Pancreas (tissue), 10 donors: ENCODE measurements at regions of chr11 and their contacts with region 1.

Region 1: DNA sequence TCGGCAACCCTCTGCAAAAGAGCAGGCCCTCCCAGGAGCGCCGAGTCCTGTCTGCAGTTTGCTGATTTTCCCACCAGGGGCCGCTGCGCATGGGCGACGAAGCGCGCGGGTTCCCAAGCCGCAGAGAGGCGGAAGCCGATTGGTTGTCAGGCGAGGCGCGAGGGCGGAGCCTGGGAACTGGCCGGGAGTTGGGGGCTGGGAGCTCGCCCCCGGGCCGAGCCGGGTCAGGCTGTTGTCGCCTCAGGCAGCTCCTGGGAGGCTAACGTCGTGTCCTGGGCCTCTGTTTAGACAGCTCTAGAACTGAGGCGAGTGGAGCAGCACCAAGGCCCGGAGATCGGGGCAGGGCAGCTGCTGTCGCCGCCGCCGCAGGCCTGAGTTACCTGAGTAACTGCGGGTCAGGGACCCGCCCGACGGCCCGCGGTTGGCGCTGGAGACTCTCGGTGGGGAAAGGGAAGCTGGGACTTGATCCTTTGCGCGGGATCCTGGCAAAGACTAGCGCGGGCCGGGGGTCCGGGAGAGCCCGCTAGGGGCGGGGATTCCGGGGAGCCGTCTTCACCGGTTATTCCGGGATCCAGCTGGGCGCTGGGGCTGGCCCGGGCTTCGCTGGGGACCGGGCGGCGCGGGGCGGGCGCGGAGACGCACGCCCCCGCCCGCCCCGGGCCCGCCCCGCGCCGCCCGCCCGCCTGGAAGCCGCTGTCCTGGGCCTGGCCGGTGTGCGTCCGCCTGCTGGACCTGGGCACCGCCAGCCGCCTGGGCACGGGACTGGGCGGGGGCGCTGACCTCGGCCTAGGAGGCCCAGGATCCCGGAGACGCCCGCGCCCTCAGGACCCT is at the start of gene STIM1:
- DNase-seq: peak; percentile 93 to 98 (median 96)
- ATAC-seq: peak; percentile 89 to 95 (median 91)
- H3K4me3 ChIP-seq: peak within 1 kb of the TSS; percentile 80 to 92 (median 82)
- H3K27ac ChIP-seq: peak within 1 kb of the TSS; percentile 85 to 96 (median 96)
- H3K4me1 ChIP-seq: peaks cover 16 to 36% (median 28%) of the 10 kb centered on the region in 3 donors
- H3K27me3 ChIP-seq: no peaks in the 10 kb centered on the region
- CTCF ChIP-seq: peak; percentile 96 to 98 (median 97)
- total RNA-seq, gene STIM1: 17.0 to 28.9 (median 20.4) TPM

Region 2: DNA sequence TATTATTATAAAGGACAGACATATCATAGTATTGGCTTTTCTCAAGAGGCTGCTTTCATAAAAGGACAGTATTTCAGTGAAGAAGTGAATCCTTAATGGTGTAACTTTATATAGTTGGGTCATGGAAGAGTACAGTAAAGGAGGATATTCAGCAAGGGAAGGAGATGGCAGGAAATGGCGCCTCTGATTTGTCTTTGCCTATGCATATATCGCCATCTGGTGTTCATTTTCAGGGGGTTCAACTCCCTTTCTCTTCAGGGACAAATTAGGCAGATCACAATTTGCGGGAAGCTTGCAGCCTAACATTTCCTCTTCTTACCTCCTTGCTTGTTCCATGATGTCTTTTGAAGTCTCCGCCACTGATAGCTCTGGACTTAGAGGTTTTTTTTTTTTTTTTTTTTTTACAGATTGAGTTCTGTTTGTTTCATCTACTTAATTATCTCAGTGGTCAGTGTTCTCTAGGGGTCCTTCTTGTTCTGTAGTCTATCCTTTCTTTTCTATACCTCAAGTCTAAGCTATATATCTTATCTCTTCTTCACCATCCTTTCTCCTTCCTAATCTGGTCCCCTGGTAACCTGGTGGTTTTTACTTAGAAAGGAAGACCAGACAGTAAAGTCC is 217.6 kb after region 1 on chr11:
- intact Hi-C with region 1: loop called in 2 of 3 experiments (anchors 2 to 5 kb)
- DNase-seq: peak in 3 of 6 donors; percentile 47 to 67 (median 57)
- ATAC-seq: peak; percentile 93 to 98 (median 98)
- H3K4me3 ChIP-seq: no peak overlapping the region
- H3K27ac ChIP-seq: no peak overlapping the region
- H3K4me1 ChIP-seq: no peaks in the 10 kb centered on the region
- H3K27me3 ChIP-seq: no peaks in the 10 kb centered on the region
- CTCF ChIP-seq: peak; percentile 68 to 80 (median 70)